Activated CD8-positive, alpha-beta memory T cell treated with anti-CD3 and anti-CD28 coated beads, Interleukin-2, amount 10 ng/mL, durations not matched to agents 7 days and 5 days (primary cell): ENCODE measurements at regions of chr2 and their contacts with region 1.

Region 1: GRCh38 chr2:69816923-69817542 is 12.4 kb upstream of the GMCL1 start:
- DNase-seq: peak; percentile 89
- ATAC-seq: peak; percentile 80
- H3K4me3 Mint-ChIP-seq: no peak overlapping the region
- H3K27ac Mint-ChIP-seq: peak overlapping the region; percentile 17
- H3K4me1 Mint-ChIP-seq: peaks cover 10% of the 10 kb centered on the region
- H3K27me3 Mint-ChIP-seq: no peaks in the 10 kb centered on the region

Region 2: DNA sequence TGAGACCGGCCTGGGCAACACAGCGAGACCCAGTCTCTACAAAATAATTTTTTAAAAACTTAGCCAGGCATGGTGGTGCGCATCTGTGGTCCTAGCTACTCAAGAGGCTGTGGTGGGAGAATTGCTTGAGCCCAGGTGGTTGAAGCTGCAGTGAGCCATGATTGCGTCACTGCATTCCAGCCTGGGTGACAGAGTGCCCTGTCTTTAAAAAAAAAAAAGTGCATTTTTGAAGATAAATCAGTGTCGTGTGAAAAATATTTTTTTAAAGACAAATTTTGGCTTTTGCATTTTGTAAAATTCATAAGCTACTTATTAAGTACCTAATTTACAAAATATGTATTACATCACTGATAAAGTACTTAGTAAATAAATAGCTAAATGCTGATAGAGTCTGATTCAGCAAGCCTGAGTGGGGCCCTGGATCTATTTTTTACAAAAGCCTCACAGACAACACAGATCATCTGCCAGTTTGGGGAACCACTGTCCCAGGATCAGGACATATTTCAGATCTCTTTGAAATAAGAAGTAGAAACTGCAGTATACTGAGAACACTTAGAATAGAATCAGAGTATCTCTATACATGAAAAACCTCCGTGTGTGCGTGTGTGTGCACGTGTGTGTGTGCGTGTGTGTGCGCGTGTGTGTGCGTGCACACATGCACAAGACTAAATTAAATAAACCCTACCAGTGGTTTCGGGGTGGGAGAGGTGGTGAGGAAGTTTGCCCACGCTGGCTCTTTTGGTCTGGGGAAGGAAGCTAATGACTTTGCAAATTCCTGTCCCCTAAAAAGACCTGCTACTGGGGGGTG is 235.1 kb before region 1 on chr2:
- CTCF ChIA-PET with region 1: no interaction called
- DNase-seq: peak; percentile 60
- ATAC-seq: peak; percentile 43
- H3K4me3 Mint-ChIP-seq: peak overlapping the region; percentile 57
- H3K27ac Mint-ChIP-seq: peak overlapping the region; percentile 78
- H3K4me1 Mint-ChIP-seq: peaks cover 74% of the 10 kb centered on the region
- H3K27me3 Mint-ChIP-seq: no peaks in the 10 kb centered on the region

Region 3: GRCh38 chr2:69741619-69742466 is 75.2 kb before region 1 on chr2 and contains the start of gene ANXA4:
- CTCF ChIA-PET with region 1: interaction called, 26 read pairs
- DNase-seq: peak; percentile 81
- ATAC-seq: peak; percentile 94
- H3K4me3 Mint-ChIP-seq: peak within 1 kb of the TSS; percentile 87
- H3K27ac Mint-ChIP-seq: peak within 1 kb of the TSS; percentile 85
- H3K4me1 Mint-ChIP-seq: peaks cover 19% of the 10 kb centered on the region
- H3K27me3 Mint-ChIP-seq: no peaks in the 10 kb centered on the region
- total RNA-seq, gene ANXA4: 56.1 to 66.6 TPM

Region 4: DNA sequence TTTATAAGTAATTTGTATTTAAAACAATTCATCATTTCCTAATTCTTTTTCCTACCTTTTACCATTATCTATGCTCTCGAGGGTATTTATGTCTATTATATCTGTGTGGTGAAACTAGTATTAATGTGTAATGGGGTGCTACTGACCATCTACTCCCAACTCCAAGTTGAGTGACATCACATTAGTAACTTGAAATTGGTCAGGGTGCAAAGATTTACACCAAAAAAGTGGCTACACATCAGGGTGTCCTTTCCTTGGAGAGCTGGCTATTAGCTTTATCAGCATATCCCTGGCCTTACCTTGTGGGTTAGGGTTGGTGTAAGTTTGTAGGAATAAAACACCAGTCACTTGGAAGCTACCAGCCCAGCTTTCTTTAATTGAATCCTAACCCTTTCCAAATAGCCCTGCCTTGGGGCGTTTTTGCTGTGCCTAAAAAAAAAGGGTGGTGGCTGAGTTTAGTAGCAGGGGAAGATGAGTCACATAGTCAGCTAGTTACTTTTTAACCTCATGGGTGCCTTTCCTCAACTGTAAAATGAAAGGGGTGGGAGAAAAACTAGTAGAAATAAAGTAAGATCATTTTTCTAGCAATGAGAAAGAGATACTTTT is 61.1 kb before region 1 on chr2:
- CTCF ChIA-PET with region 1: interaction called, 10 read pairs
- DNase-seq: peak; percentile 48
- ATAC-seq: peak; percentile 95
- H3K4me3 Mint-ChIP-seq: no peak overlapping the region
- H3K27ac Mint-ChIP-seq: peak overlapping the region; percentile 73
- H3K4me1 Mint-ChIP-seq: peaks cover 19% of the 10 kb centered on the region
- H3K27me3 Mint-ChIP-seq: no peaks in the 10 kb centered on the region

Region 5: DNA sequence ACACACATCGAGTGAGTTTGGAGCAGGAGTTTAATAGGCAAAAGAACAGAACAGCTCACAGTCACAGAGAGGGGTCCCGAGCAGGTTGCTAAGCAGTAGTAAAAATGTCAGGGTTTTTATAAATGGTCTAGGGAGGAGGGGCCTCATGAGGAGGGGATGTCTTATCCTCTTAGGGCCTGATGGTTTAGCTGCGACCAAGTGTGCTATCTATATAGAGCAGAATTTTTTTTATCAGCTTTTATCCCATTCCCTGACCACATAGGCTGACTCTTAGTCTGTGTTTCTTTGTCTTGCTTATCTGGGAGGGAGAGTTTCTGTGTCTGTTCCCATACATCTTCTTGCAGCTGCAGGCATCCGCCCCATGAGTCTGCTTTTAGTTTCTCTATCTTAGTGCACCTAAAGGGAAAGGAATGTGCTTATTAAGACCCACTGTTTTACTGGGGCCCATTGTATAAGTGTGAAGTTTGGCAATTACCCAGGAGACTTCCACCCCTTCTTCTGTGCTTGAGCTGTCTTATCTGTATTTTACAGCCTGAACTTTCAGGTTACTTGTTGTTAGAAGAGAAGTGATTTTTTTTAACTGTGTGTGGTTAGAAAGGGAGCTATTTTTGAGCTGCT is 18.0 kb before region 1 on chr2:
- CTCF ChIA-PET with region 1: interaction called, 13 read pairs
- DNase-seq: no peak
- ATAC-seq: no peak
- H3K4me3 Mint-ChIP-seq: peak overlapping the region; percentile 37
- H3K27ac Mint-ChIP-seq: no peak overlapping the region
- H3K4me1 Mint-ChIP-seq: peaks cover 15% of the 10 kb centered on the region
- H3K27me3 Mint-ChIP-seq: no peaks in the 10 kb centered on the region

Region 6: DNA sequence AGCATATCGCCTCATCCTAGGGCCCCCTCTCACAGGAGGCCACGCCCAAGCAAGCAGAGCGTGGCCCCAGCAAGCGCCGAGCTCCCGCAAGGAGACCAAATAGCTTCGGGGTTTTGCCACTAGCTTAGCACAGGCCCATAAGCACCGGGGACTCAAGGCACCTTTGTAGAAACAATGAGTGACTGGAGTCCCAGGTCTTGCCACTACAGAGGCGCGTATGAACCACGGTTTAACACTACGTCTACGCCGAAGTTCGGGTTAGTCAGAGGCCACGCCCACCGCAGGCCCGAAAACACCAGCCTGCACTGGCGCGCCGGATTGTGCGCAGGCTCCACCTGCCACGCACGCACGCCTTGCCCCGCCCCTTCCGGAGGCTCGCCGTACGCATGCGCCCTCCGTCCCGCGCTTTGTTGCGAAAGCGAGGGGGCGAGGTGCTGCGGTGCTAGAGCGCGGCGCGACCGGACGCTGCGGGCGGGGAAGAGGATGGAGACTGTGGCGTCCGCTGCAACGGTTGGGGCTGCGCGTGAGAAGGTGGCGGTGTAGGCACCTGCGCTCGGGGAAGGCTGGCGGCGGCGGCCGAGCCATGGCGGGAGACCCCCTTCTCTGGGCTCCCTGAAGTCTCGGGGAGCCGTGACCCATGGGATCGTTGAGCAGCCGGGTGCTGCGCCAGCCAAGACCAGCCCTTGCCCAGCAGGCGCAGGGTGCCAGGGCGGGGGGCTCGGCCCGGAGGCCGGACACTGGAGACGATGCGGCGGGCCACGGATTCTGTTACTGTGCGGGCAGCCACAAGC is 12.4 kb after region 1 on chr2 and contains the start of gene GMCL1:
- CTCF ChIA-PET with region 1: interaction called, 17 read pairs
- DNase-seq: peak; percentile 99
- ATAC-seq: peak; percentile 93
- H3K4me3 Mint-ChIP-seq: peak within 1 kb of the TSS; percentile 88
- H3K27ac Mint-ChIP-seq: peak within 1 kb of the TSS; percentile 95
- H3K4me1 Mint-ChIP-seq: peaks cover 55% of the 10 kb centered on the region
- H3K27me3 Mint-ChIP-seq: no peaks in the 10 kb centered on the region
- total RNA-seq, gene GMCL1: 26.5 to 32.6 TPM